PC-9 (cell line): ENCODE measurements at regions of chr3 and their contacts with region 1.

Region 1: DNA sequence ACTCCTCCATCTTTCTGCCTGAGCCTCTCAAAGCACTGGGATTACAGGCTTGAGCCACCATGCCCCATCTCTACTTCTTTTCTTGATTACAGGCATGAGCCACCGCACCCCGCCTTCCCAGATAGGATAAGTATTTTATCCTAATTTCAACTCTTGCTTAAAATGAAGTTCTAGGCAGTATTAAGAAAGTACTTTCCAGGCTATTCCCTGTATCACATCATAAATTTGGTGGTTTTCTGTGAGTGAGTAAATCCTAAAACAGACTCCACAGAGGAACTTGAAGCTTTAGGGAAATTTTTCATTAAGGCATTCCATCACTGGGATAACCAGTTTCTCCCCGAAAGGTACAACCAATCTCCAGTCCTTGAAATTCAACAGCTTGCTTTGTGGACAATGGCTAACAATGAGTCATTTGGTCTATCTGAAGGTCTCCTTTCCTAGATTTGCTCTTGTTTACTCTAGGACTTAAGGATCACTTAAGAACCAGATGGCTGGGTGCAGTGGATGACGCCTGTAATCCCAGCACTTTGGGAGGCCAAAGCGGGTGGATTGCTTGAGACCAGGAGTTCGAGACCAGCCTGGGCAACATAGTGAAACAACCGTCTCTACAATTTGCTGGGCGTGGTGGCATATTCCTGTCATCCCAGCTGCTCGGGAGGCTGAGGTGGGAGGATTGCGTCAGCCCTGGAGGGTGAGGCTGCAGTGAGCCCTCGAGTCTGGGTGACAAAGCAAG is 49.7 kb upstream of the SKIL start:
- DNase-seq: peak; percentile 59 to 99
- H3K4me3 ChIP-seq: no peak overlapping the region
- H3K27ac ChIP-seq: peak overlapping the region; percentile 42
- H3K4me1 ChIP-seq: peaks cover 19% of the 10 kb centered on the region
- H3K27me3 ChIP-seq: no peaks in the 10 kb centered on the region
- CTCF ChIP-seq: no peak

Region 2: GRCh38 chr3:170622369-170623159 is 314.7 kb after region 1 on chr3:
- CTCF ChIA-PET with region 1: no interaction called
- POLR2A ChIA-PET with region 1: interaction called, 25 read pairs
- intact Hi-C with region 1: no loop called
- DNase-seq: no peak
- H3K4me3 ChIP-seq: no peak overlapping the region
- H3K27ac ChIP-seq: no peak overlapping the region
- H3K4me1 ChIP-seq: no peaks in the 10 kb centered on the region
- H3K27me3 ChIP-seq: no peaks in the 10 kb centered on the region
- CTCF ChIP-seq: no peak

Region 3: GRCh38 chr3:170848292-170848917 is 540.6 kb after region 1 on chr3:
- CTCF ChIA-PET with region 1: no interaction called
- POLR2A ChIA-PET with region 1: no interaction called
- intact Hi-C with region 1: loop called (anchors 1 kb)
- DNase-seq: no peak
- H3K4me3 ChIP-seq: no peak overlapping the region
- H3K27ac ChIP-seq: no peak overlapping the region
- H3K4me1 ChIP-seq: no peaks in the 10 kb centered on the region
- H3K27me3 ChIP-seq: no peaks in the 10 kb centered on the region
- CTCF ChIP-seq: peak; percentile 79